ENCODE measurements at regions of chr16 and their contacts with region 1.

Region 1: GRCh38 chr16:8797364-8798173 is at the starts of genes PMM2 and TMEM186:
- DNase-seq: peak; percentile 94 to 96
- ATAC-seq: peak; percentile 99 to 100 (median 100)
- H3K4me3 ChIP-seq: peak within 1 kb of the TSS; percentile 67 to 98 (median 86)
- H3K27ac ChIP-seq: peak within 1 kb of the TSS; percentile 25 to 89 (median 82)
- H3K4me1 ChIP-seq: peaks cover 9 to 43% (median 30%) of the 10 kb centered on the region in 9 donors
- H3K27me3 ChIP-seq: no peaks in the 10 kb centered on the region
- CTCF ChIP-seq: no peak
- total RNA-seq, gene PMM2: 11.5 to 25.9 (median 13.9) TPM
- total RNA-seq, gene TMEM186: 9.5 to 15.1 (median 13.9) TPM

Region 2: GRCh38 chr16:8567750-8568617 is 229.6 kb before region 1 on chr16:
- intact Hi-C with region 1: loop called in 4 of 10 experiments (anchors 5 to 10 kb)
- DNase-seq: peak; percentile 40 to 70
- ATAC-seq: peak; percentile 65 to 84 (median 74)
- H3K4me3 ChIP-seq: no peak overlapping the region
- H3K27ac ChIP-seq: no peak overlapping the region
- H3K4me1 ChIP-seq: peaks cover 0 to 20% (median 0%) of the 10 kb centered on the region in 9 donors
- H3K27me3 ChIP-seq: peaks cover 0 to 18% (median 10%) of the 10 kb centered on the region in 7 donors
- CTCF ChIP-seq: peak; percentile 93 to 98 (median 97)

Region 3: DNA sequence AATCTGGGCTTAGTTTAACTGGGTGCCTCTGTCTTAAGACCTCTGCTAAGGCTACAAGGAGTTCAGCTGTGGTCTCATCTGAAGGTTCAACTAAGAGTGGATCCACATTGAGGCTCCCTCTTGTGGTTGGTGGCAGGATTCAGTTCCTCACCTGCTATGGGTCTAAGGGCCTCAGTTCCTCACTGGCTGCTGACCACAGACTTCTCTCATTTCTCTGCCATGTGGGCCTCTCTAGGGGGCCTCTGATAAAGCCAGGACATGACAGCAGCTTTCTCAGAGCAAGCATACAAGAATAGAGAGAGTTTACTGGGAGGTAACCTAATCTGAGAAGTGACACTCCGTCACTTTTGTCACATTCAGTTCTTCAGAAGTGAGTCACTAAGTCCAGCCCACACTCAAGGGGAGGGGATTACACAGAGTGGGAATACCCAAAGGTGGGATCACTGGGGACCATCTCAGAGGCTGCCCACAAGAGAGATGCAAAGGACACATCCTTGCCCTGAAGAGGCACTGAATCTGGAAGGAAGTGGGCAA is 142.3 kb before region 1 on chr16:
- intact Hi-C with region 1: loop called in 8 of 10 experiments (anchors 2 to 5 kb)
- DNase-seq: no peak
- ATAC-seq: peak in 2 of 8 donors; percentile 28 to 37
- H3K4me3 ChIP-seq: no peak overlapping the region
- H3K27ac ChIP-seq: no peak overlapping the region
- H3K4me1 ChIP-seq: no peaks in the 10 kb centered on the region
- H3K27me3 ChIP-seq: no peaks in the 10 kb centered on the region
- CTCF ChIP-seq: peak in 3 of 9 donors; percentile 22 to 60 (median 29)

Region 4: GRCh38 chr16:8674413-8675022 is 123.1 kb before region 1 on chr16 and contains the start of gene ABAT:
- intact Hi-C with region 1: loop called in 4 of 10 experiments (anchors 5 kb)
- DNase-seq: peak; percentile 88 to 92
- ATAC-seq: peak; percentile 100
- H3K4me3 ChIP-seq: peak within 1 kb of the TSS; percentile 40 to 84 (median 72)
- H3K27ac ChIP-seq: peak within 1 kb of the TSS in 4 of 10 donors; percentile 10 to 57 (median 38)
- H3K4me1 ChIP-seq: peaks cover 3 to 15% (median 10%) of the 10 kb centered on the region in 9 donors
- H3K27me3 ChIP-seq: no peaks in the 10 kb centered on the region
- CTCF ChIP-seq: no peak
- total RNA-seq, gene ABAT: 3.7 to 35.9 (median 17.7) TPM

Region 5: DNA sequence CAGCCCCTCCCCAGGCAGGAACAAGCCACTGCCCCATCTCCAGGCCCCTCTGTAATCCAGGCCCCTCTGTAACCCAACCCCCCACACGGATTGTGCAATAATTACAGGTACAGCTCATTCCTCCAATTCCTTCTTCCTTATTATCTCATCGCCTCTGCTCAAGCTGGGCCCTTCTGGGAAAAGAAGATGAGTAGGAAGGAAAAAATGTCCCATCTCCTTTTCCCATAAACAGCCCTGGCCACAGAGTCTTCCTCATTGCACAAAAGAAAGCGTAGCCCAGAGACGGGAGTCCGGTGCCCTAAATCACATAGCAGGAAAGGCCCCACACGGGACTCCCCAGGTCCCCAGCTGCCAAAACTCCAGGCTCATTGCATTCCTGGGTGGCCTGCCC is 80.9 kb after region 1 on chr16:
- intact Hi-C with region 1: loop called in 4 of 10 experiments (anchors 5 to 10 kb)
- DNase-seq: no peak
- ATAC-seq: peak in 1 of 8 donors; percentile 21
- H3K4me3 ChIP-seq: no peak overlapping the region
- H3K27ac ChIP-seq: no peak overlapping the region
- H3K4me1 ChIP-seq: peaks cover 0 to 5% (median 0%) of the 10 kb centered on the region in 9 donors
- H3K27me3 ChIP-seq: peaks cover 0 to 12% (median 0%) of the 10 kb centered on the region in 7 donors
- CTCF ChIP-seq: no peak